GM18951 (cell line): ENCODE measurements at regions of chr3 and their contacts with region 1.

Region 1: GRCh38 chr3:48273594-48274211 is 32.8 kb downstream of the ZNF589 start:
- POLR2A ChIP-seq: no peak

Region 2: DNA sequence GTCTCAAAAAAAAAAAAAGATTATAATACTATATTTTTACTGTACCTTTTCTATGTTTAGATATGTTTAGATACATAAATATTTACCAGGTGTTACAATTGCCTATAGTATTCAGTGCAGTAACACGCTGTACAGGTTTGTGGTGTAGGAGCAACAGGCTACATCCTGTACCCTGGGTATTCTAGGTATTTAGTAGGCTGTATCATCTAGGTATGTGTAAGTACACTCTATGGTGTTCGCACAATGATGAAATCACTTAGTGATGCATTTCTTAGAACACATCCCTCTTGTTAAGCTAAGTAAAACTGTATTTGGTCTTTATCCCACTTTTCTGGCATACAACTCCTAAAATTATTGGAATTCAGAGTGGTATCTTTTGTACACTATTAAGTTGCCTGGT is 163.2 kb before region 1 on chr3:
- in situ Hi-C with region 1: no loop called
- POLR2A ChIP-seq: no peak

Region 3: DNA sequence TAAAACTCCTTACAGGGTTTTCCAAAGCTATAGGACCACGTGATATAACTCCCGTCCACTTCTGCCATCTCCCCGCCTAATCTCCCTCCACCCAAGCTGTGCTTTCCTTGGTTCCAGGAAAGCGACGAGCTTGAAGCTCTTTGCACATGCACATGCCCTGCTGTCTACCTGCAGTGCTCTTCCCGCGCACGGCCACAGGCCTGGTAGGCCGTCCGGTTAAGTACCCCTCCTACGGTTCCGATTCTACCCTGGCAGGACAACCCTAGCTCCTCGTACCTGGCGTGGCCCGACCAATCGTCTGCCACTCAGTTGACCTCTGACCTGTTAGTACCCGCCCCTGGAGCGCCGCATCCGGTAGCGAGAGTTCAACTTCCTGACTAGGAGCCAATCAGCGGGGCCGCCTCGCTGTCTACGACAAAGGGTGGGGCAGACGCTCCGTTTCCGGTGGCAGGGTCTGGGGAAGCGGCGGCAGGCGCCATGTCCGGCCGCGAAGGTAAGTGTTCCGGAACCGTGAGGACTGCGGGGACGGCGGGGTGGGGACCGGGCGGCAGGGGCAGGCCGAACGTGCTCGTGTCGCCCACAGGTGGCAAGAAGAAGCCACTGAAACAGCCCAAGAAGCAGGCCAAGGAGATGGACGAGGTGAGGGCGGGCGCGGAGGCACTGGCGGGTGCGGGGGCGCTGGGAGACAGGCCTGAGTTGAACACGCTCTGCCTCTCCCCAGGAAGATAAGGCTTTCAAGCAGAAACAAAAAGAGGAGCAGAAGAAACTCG is 166.3 kb after region 1 on chr3 and contains the starts of genes CCDC51 and TMA7:
- in situ Hi-C with region 1: loop called (anchors 10 kb)
- POLR2A ChIP-seq: peak; percentile 82